Lower leg skin (tissue), 4 donors: ENCODE measurements at regions of chr5 and their contacts with region 1.

Region 1: GRCh38 chr5:55724281-55724680 is 12.2 kb upstream of the SLC38A9 start:
- DNase-seq: no peak
- H3K4me3 ChIP-seq: no peak overlapping the region
- CTCF ChIP-seq: no peak
- POLR2A ChIP-seq: no peak

Region 2: GRCh38 chr5:57246426-57246825 is 1522.1 kb after region 1 on chr5:
- intact Hi-C with region 1: loop called (anchors 5 kb)
- DNase-seq: no peak
- H3K4me3 ChIP-seq: no peak overlapping the region
- CTCF ChIP-seq: no peak
- POLR2A ChIP-seq: no peak